ENCODE measurements at regions of chr17 and their contacts with region 1.

Region 1: GRCh38 chr17:40615295-40615988 is 32.2 kb downstream of the SMARCE1 start:
- DNase-seq: peak; percentile 87
- H3K4me3 ChIP-seq: no peak overlapping the region
- H3K4me3 Mint-ChIP-seq: no peak overlapping the region
- H3K27ac Mint-ChIP-seq: no peak overlapping the region
- H3K4me1 ChIP-seq: peaks cover 27% of the 10 kb centered on the region
- H3K4me1 Mint-ChIP-seq: peaks cover 25% of the 10 kb centered on the region
- H3K27me3 ChIP-seq: no peaks in the 10 kb centered on the region
- H3K27me3 Mint-ChIP-seq: no peaks in the 10 kb centered on the region
- CTCF ChIP-seq: peak; percentile 80 to 82

Region 2: DNA sequence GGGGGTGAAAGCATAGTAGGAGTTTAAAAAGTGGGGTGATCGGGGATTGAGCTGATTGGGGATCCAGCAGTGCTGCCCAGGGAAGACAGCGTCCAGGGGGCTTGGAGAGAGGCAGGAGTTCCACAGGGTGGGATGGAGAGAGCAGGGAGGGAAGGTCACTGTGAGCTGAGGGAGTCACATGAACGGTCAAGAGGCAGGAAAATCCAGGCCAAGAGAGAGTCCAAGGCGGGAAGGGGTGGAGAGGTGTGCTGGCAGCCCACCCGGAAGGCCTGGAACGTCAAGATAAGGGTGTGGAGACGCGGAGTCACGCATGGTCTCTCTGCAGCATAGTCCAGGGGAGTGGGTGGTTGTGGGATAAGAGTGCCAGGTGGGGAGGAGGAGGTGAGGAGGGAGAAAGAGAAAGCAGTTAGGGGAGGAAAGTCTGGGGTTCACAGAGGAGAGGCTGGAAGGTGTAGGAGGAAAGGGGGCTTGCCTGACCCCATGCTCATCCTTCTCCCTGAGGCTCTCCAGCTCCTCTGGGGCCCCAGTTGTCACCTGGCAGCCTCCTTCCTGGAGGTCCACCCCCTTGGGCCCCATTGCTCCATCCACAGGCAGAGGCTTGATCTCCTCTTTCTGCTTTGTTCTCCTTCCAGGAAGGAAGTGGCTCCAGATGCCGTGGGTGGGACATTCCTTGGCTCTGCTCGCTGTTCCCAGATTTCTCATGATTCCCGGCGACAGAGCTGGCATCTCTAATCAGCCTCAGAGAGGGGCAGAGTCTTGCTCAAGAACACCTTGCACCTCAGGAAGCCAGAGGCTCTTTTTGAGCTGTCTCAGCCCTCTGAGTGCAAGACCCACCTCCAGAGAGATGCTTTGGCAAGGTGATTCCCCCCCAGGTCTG is 78.9 kb before region 1 on chr17:
- CTCF ChIA-PET with region 1: interaction called, 4 read pairs
- POLR2A ChIA-PET with region 1: interaction called, 18 read pairs
- intact Hi-C with region 1: no loop called
- DNase-seq: no peak
- H3K4me3 ChIP-seq: no peak overlapping the region
- H3K4me3 Mint-ChIP-seq: no peak overlapping the region
- H3K27ac Mint-ChIP-seq: no peak overlapping the region
- H3K4me1 ChIP-seq: 0 out of 2 replicates have a peak, but pooled peaks cover 9% of the 10 kb centered on the region
- H3K4me1 Mint-ChIP-seq: no peaks in the 10 kb centered on the region
- H3K27me3 ChIP-seq: no peaks in the 10 kb centered on the region
- H3K27me3 Mint-ChIP-seq: no peaks in the 10 kb centered on the region
- CTCF ChIP-seq: no peak

Region 3: GRCh38 chr17:40637931-40638330 is 22.5 kb after region 1 on chr17:
- CTCF ChIA-PET with region 1: no interaction called
- POLR2A ChIA-PET with region 1: no interaction called
- intact Hi-C with region 1: no loop called
- DNase-seq: no peak
- H3K4me3 ChIP-seq: no peak overlapping the region
- H3K4me3 Mint-ChIP-seq: no peak overlapping the region
- H3K27ac Mint-ChIP-seq: no peak overlapping the region
- H3K4me1 ChIP-seq: no peaks in the 10 kb centered on the region
- H3K4me1 Mint-ChIP-seq: no peaks in the 10 kb centered on the region
- H3K27me3 ChIP-seq: no peaks in the 10 kb centered on the region
- H3K27me3 Mint-ChIP-seq: no peaks in the 10 kb centered on the region
- CTCF ChIP-seq: no peak

Region 4: DNA sequence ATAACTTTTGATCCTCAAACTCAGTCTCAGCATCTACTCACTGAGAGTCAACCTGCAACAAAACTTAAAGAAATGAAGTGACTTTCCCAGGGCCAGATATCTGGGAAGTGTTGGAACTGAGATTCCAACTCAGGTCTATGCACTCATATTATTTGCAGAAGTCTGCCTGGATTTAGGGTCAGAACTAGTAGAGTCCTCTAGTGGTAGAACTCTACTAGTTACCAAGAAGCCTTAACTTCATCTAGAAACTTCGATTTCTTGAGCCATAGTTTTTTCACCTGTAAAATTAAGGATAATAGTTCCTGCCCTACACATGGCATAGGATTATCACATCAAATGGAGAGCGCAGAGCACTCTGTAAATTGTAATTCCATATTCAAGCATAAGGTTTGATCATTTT is 111.5 kb after region 1 on chr17:
- CTCF ChIA-PET with region 1: interaction called, 15 read pairs
- POLR2A ChIA-PET with region 1: no interaction called
- intact Hi-C with region 1: loop called (anchors 1 kb)
- DNase-seq: peak in 1 of 2 experiments; percentile 29
- H3K4me3 ChIP-seq: no peak overlapping the region
- H3K4me3 Mint-ChIP-seq: no peak overlapping the region
- H3K27ac Mint-ChIP-seq: no peak overlapping the region
- H3K4me1 ChIP-seq: no peaks in the 10 kb centered on the region
- H3K4me1 Mint-ChIP-seq: no peaks in the 10 kb centered on the region
- H3K27me3 ChIP-seq: no peaks in the 10 kb centered on the region; the same call in 1 of the 2 replicates
- H3K27me3 Mint-ChIP-seq: peaks cover 10% of the 10 kb centered on the region
- CTCF ChIP-seq: peak; percentile 41 to 76

Region 5: DNA sequence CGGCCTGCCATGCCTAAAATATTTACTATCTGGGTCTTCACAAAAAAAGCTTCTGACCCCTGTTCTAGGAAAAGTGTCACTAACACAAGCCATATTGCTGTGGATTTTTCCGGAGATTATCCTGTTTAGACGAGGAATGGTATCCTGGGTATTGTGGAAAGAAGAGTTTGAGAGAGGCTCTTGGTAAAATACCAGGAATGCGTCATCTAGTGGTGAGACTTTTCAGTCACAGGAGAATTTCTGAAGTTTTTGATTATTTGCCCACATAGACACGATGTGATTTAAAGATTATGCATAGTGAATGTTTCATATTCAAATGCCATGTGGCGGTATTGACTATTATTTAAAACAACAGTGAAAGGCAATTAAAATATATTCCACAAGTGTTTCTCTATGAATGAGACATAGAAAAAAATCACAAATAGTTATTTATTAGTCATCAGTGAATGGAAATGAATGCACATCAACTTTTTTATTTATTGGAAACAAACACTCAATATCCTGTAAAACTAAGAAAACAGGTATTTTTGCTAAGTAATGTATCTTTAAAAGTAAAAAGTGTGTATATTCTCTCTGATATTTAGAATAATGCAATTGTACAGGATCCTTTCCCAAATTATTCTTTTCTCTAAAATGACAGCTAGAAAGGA is 176.5 kb after region 1 on chr17:
- CTCF ChIA-PET with region 1: interaction called, 7 read pairs
- POLR2A ChIA-PET with region 1: no interaction called
- intact Hi-C with region 1: loop called (anchors 1 kb)
- DNase-seq: peak in 1 of 2 experiments; percentile 38
- H3K4me3 ChIP-seq: no peak overlapping the region
- H3K4me3 Mint-ChIP-seq: no peak overlapping the region
- H3K27ac Mint-ChIP-seq: no peak overlapping the region
- H3K4me1 ChIP-seq: no peaks in the 10 kb centered on the region
- H3K4me1 Mint-ChIP-seq: no peaks in the 10 kb centered on the region
- H3K27me3 ChIP-seq: no peaks in the 10 kb centered on the region
- H3K27me3 Mint-ChIP-seq: peaks cover 9% of the 10 kb centered on the region
- CTCF ChIP-seq: peak; percentile 68 to 85